ENCODE measurements at regions of chr3 and their contacts with region 1.

Region 1: GRCh38 chr3:33131331-33132018 is 17.7 kb downstream of the CRTAP start:
- DNase-seq: no peak
- ATAC-seq: peak; percentile 47 to 74 (median 72)
- H3K4me3 ChIP-seq: no peak overlapping the region
- H3K27ac ChIP-seq: no peak overlapping the region
- H3K4me1 ChIP-seq: peaks cover 0 to 8% (median 0%) of the 10 kb centered on the region in 12 donors
- H3K27me3 ChIP-seq: no peaks in the 10 kb centered on the region
- CTCF ChIP-seq: peak; percentile 66 to 83 (median 77)
- POLR2A ChIP-seq: no peak

Region 2: GRCh38 chr3:32856355-32856889 is 275.1 kb before region 1 on chr3:
- intact Hi-C with region 1: no loop called
- DNase-seq: no peak
- ATAC-seq: peak in 2 of 4 donors; percentile 41 to 59
- H3K4me3 ChIP-seq: no peak overlapping the region
- H3K27ac ChIP-seq: no peak overlapping the region
- H3K4me1 ChIP-seq: peaks cover 0 to 4% (median 0%) of the 10 kb centered on the region in 12 donors
- H3K27me3 ChIP-seq: no peaks in the 10 kb centered on the region
- CTCF ChIP-seq: no peak
- POLR2A ChIP-seq: no peak

Region 3: GRCh38 chr3:33221241-33221640 is 89.8 kb after region 1 on chr3:
- intact Hi-C with region 1: loop called in 2 of 10 experiments (anchors 5 to 10 kb)
- DNase-seq: no peak
- ATAC-seq: no peak
- H3K4me3 ChIP-seq: no peak overlapping the region
- H3K27ac ChIP-seq: no peak overlapping the region
- H3K4me1 ChIP-seq: peaks cover 0 to 14% (median 0%) of the 10 kb centered on the region in 12 donors
- H3K27me3 ChIP-seq: peaks cover 0 to 37% (median 11%) of the 10 kb centered on the region in 9 donors
- CTCF ChIP-seq: no peak
- POLR2A ChIP-seq: no peak

Region 4: GRCh38 chr3:33229066-33229465 is 97.6 kb after region 1 on chr3:
- intact Hi-C with region 1: loop called in 2 of 10 experiments (anchors 5 to 10 kb)
- DNase-seq: no peak
- ATAC-seq: no peak
- H3K4me3 ChIP-seq: no peak overlapping the region
- H3K27ac ChIP-seq: no peak overlapping the region
- H3K4me1 ChIP-seq: no peaks in the 10 kb centered on the region
- H3K27me3 ChIP-seq: no peaks in the 10 kb centered on the region
- CTCF ChIP-seq: no peak
- POLR2A ChIP-seq: no peak

Region 5: GRCh38 chr3:33372218-33373081 is 241.0 kb after region 1 on chr3:
- intact Hi-C with region 1: loop called (anchors 1 to 5 kb)
- DNase-seq: no peak
- ATAC-seq: peak in 3 of 4 donors; percentile 59 to 74 (median 66)
- H3K4me3 ChIP-seq: no peak overlapping the region
- H3K27ac ChIP-seq: no peak overlapping the region
- H3K4me1 ChIP-seq: peaks cover 0 to 9% (median 0%) of the 10 kb centered on the region in 12 donors
- H3K27me3 ChIP-seq: no peaks in the 10 kb centered on the region
- CTCF ChIP-seq: peak; percentile 84 to 93 (median 90)
- POLR2A ChIP-seq: no peak

Region 6: GRCh38 chr3:33563474-33563873 is 432.0 kb after region 1 on chr3:
- intact Hi-C with region 1: no loop called
- DNase-seq: no peak
- ATAC-seq: no peak
- H3K4me3 ChIP-seq: no peak overlapping the region
- H3K27ac ChIP-seq: no peak overlapping the region
- H3K4me1 ChIP-seq: peaks cover 0 to 2% (median 0%) of the 10 kb centered on the region in 12 donors
- H3K27me3 ChIP-seq: no peaks in the 10 kb centered on the region
- CTCF ChIP-seq: no peak
- POLR2A ChIP-seq: no peak

Measured in heart left ventricle (tissue), 16 donors.